ENCODE measurements at regions of chr9 and their contacts with region 1.

Region 1: GRCh38 chr9:34994260-34994899 is 4.8 kb downstream of the DNAJB5 start:
- DNase-seq: no peak
- ATAC-seq: peak; percentile 21

Region 2: GRCh38 chr9:34759432-34760134 is 234.8 kb before region 1 on chr9:
- intact Hi-C with region 1: no loop called
- DNase-seq: no peak
- ATAC-seq: peak; percentile 73

Region 3: GRCh38 chr9:35051069-35051967 is 56.9 kb after region 1 on chr9:
- intact Hi-C with region 1: loop called (anchors 10 kb)
- DNase-seq: no peak
- ATAC-seq: peak; percentile 89

Measured in Right ventricle myocardium superior (tissue), 1 donor.